Caco-2 (cell line): ENCODE measurements at regions of chr19 and their contacts with region 1.

Region 1: DNA sequence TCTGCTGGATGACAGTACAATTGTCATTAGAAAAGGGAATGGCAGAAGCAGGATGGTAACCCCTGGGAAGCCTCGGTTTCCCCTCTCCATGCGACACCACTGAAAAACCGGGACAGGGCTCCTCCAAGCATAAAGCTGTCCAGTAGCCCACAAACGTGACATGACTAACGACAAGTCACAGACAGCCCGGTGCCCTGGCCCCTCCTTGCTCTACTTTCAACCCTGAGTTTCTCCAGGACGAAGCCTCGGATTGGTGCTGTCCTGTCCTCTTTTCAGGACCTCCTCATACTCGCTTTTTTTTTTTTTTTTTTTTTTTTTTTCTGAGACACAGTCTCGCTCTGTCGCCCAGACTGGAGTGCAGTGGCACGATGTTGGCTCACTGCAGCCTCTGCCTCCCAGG is 16.3 kb downstream of the DPP9 start:
- DNase-seq: no peak
- H3K4me3 ChIP-seq: no peak overlapping the region
- H3K4me3 Mint-ChIP-seq: no peak overlapping the region
- H3K27ac Mint-ChIP-seq: no peak overlapping the region
- H3K4me1 ChIP-seq: peaks cover 13% of the 10 kb centered on the region
- H3K4me1 Mint-ChIP-seq: no peaks in the 10 kb centered on the region
- H3K27me3 ChIP-seq: no peaks in the 10 kb centered on the region
- H3K27me3 Mint-ChIP-seq: no peaks in the 10 kb centered on the region
- CTCF ChIP-seq: no peak

Region 2: GRCh38 chr19:4620675-4621074 is 86.6 kb before region 1 on chr19:
- CTCF ChIA-PET with region 1: no interaction called
- POLR2A ChIA-PET with region 1: no interaction called
- intact Hi-C with region 1: no loop called
- DNase-seq: no peak
- H3K4me3 ChIP-seq: no peak overlapping the region
- H3K4me3 Mint-ChIP-seq: no peak overlapping the region
- H3K27ac Mint-ChIP-seq: no peak overlapping the region
- H3K4me1 ChIP-seq: peaks cover 9% of the 10 kb centered on the region; the same call in 1 of the 2 replicates
- H3K4me1 Mint-ChIP-seq: no peaks in the 10 kb centered on the region
- H3K27me3 ChIP-seq: no peaks in the 10 kb centered on the region
- H3K27me3 Mint-ChIP-seq: peaks cover 7% of the 10 kb centered on the region
- CTCF ChIP-seq: no peak

Region 3: DNA sequence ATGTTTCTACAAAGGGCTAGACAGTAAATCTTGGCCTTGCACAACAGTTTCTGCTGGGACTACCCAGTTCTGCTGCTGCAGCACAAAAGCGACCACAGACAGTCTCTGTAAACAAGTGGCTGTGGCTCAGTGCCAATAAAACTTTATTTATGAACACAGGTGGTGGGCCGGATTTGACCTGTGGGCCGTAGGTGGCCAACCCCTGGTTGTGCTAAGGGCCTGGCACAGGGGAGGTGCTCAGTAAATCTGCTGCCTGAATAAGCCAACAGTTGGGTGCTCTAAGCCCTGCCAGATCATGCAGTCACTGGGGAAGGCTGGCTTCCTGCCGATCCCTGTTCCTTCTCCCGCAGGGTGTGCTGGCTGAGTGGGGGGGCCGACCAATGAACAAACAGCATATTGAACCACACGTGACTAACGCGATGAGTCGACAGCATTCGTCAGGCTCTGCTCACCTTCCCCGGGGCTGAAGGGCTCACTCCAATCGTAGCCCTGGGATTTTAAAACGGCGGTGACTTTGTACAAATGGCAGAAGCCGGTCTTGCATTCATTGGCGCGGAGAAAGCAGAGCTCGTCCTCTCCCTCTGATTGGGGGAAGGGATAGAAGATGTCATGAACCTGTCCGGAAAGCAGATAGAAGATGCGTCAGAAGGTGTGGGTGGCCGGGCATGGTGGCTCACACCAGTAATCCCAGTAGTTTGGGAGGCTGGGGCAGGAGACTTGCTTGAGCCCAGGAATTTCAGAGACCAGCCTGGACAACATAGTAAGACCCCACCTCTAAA is 12.9 kb before region 1 on chr19:
- CTCF ChIA-PET with region 1: no interaction called
- POLR2A ChIA-PET with region 1: interaction called, 19 read pairs
- intact Hi-C with region 1: no loop called
- DNase-seq: no peak
- H3K4me3 ChIP-seq: no peak overlapping the region
- H3K4me3 Mint-ChIP-seq: no peak overlapping the region
- H3K27ac Mint-ChIP-seq: no peak overlapping the region
- H3K4me1 ChIP-seq: no peaks in the 10 kb centered on the region
- H3K4me1 Mint-ChIP-seq: no peaks in the 10 kb centered on the region
- H3K27me3 ChIP-seq: no peaks in the 10 kb centered on the region
- H3K27me3 Mint-ChIP-seq: no peaks in the 10 kb centered on the region
- CTCF ChIP-seq: no peak